Left colon (tissue), 2 donors: ENCODE measurements at regions of chr13 and their contacts with region 1.

Region 1: GRCh38 chr13:43804461-43805070 is 17.8 kb upstream of the ENOX1 start:
- DNase-seq: no peak
- ATAC-seq: peak; percentile 55

Region 2: DNA sequence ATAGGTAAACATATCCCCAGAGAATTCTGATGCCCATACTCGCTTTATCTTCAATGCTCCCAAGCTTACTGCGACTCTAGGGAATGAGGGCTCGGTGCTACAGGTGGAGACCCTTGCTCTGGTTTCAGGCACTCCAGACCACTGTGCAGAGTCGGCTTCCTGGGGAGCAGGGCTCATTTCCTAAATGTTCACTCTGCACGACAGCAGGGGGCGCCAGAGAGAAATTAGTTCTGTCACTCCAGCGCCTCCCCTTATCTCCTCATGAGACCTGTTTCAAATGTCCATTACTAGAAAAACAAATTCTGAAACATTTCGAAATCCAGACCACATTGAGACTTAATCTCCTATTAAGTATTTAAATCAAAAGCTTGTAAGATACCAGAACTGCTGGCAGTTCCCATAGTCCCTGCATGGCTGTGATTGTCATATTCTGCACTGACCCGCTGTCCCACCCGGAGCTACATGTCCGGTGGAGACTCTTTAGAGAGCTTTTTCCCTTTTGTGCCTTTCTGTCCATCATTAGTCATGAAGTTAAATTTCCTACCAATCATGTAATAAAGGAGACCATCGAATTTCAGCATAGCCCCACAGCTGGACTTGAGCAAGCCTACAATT is 834.9 kb before region 1 on chr13:
- intact Hi-C with region 1: loop called in 1 of 2 experiments (anchors 10 kb)
- DNase-seq: peak; percentile 74 to 92
- ATAC-seq: peak; percentile 68

Region 3: DNA sequence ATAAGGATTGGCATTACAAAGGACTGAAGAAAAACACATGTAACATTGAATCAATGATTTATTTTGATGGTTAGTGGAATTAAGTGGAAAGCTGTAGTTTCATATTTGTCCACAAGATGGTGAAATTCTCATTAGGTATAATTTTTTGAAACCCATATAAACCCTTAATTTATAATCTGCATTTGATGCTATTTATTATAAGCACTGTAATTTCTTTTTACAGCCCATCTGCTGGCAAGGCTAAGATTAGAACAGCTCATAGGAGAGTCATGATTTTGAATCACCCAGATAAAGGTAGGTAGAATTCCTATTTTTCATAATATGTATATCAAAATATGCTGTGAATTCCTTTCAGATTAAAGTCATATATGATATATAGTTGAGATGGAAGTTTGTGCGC is 719.0 kb before region 1 on chr13:
- intact Hi-C with region 1: loop called in 1 of 2 experiments (anchors 10 kb)
- DNase-seq: no peak
- ATAC-seq: no peak